ENCODE measurements at regions of chr19 and their contacts with region 1.

Region 1: GRCh38 chr19:1275260-1275975 is at the start of gene FAM174C:
- DNase-seq: peak; percentile 97 to 98
- H3K4me3 ChIP-seq: peak within 1 kb of the TSS in 2 of 3 donors; percentile 46 to 74
- H3K27ac ChIP-seq: peak within 1 kb of the TSS; percentile 80 to 99 (median 98)
- H3K4me1 ChIP-seq: peaks cover 35 to 53% of the 10 kb centered on the region in 2 donors
- H3K27me3 ChIP-seq: no peaks in the 10 kb centered on the region
- CTCF ChIP-seq: peak in 1 of 6 experiments; percentile 20
- POLR2A ChIP-seq: peak in 1 of 2 donors; percentile 89
- total RNA-seq, gene FAM174C: 50.8 to 114 (median 64.6) TPM

Region 2: GRCh38 chr19:1172363-1173158 is 102.9 kb before region 1 on chr19:
- intact Hi-C with region 1: no loop called
- DNase-seq: peak; percentile 82 to 85
- H3K4me3 ChIP-seq: peak overlapping the region; percentile 66 to 87 (median 78)
- H3K27ac ChIP-seq: peak overlapping the region; percentile 84 to 94 (median 92)
- H3K4me1 ChIP-seq: peaks cover 42 to 60% of the 10 kb centered on the region in 2 donors
- H3K27me3 ChIP-seq: no peaks in the 10 kb centered on the region
- CTCF ChIP-seq: no peak
- POLR2A ChIP-seq: peak in 1 of 2 donors; percentile 31

Region 3: DNA sequence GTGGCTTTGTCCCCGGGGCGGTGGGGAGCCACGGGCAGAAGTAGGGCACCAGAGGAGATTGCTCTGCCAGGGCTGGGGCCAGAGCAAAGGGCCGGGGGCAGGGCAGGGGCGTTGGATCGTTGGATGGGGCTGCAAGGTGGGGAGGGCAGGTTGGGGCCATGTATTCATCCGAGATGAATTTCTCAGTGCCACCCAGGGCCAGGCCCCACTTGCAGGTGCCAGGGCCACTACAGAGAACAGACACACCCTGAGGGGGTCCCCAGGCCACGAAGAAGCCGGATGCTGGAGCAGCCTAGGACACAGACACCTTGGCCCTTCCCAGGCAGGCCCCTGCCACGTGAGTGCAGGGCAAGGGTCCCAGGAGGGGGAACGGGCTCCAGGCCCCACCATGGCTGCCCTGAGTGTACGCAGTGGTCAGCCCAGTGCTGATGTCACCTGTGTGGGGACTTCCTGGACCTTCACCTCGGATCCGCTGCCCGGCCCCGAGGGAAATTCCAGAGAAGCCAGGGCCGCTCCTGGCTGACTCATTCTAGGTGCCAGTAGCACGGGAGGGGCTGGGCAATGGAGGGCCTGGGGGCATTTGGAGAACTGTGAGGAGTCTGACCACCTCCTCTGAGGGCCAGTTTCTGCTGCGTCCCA is 91.8 kb before region 1 on chr19:
- intact Hi-C with region 1: no loop called
- DNase-seq: peak; percentile 33 to 66
- H3K4me3 ChIP-seq: no peak overlapping the region
- H3K27ac ChIP-seq: peak overlapping the region in 2 of 3 donors; percentile 13 to 61
- H3K4me1 ChIP-seq: peaks cover 29 to 51% of the 10 kb centered on the region in 2 donors
- H3K27me3 ChIP-seq: no peaks in the 10 kb centered on the region
- CTCF ChIP-seq: no peak
- POLR2A ChIP-seq: no peak

Region 4: GRCh38 chr19:1355568-1356507 is 80.4 kb after region 1 on chr19:
- intact Hi-C with region 1: loop called (anchors 2 kb)
- DNase-seq: peak; percentile 32 to 44
- H3K4me3 ChIP-seq: peak overlapping the region; percentile 48 to 81 (median 61)
- H3K27ac ChIP-seq: peak overlapping the region; percentile 17 to 98 (median 85)
- H3K4me1 ChIP-seq: peaks cover 21 to 24% of the 10 kb centered on the region in 2 donors
- H3K27me3 ChIP-seq: no peaks in the 10 kb centered on the region
- CTCF ChIP-seq: no peak
- POLR2A ChIP-seq: no peak

Region 5: GRCh38 chr19:1406774-1407499 is 131.5 kb after region 1 on chr19:
- intact Hi-C with region 1: loop called (anchors 5 kb)
- DNase-seq: peak; percentile 99 to 100
- H3K4me3 ChIP-seq: peak overlapping the region in 1 of 3 donors; percentile 32
- H3K27ac ChIP-seq: peak overlapping the region; percentile 62 to 87 (median 70)
- H3K4me1 ChIP-seq: peaks cover 29 to 36% of the 10 kb centered on the region in 2 donors
- H3K27me3 ChIP-seq: no peaks in the 10 kb centered on the region
- CTCF ChIP-seq: peak in 4 of 6 experiments; percentile 22 to 58 (median 44)
- POLR2A ChIP-seq: no peak

Region 6: GRCh38 chr19:1521636-1522035 is 246.2 kb after region 1 on chr19:
- intact Hi-C with region 1: loop called (anchors 10 kb)
- DNase-seq: no peak
- H3K4me3 ChIP-seq: no peak overlapping the region
- H3K27ac ChIP-seq: no peak overlapping the region
- H3K4me1 ChIP-seq: peaks cover 0 to 7% of the 10 kb centered on the region in 2 donors
- H3K27me3 ChIP-seq: peaks cover 7% of the 10 kb centered on the region
- CTCF ChIP-seq: no peak
- POLR2A ChIP-seq: no peak